HepG2 (cell line): ENCODE measurements at regions of chr5 and their contacts with region 1.

Region 1: GRCh38 chr5:88459971-88460370 is 191.3 kb upstream of the TMEM161B start:
- DNase-seq: no peak
- ATAC-seq: no peak
- H3K4me3 ChIP-seq: no peak overlapping the region
- H3K27ac ChIP-seq: no peak overlapping the region
- H3K4me1 ChIP-seq: no peaks in the 10 kb centered on the region
- H3K27me3 ChIP-seq: no peaks in the 10 kb centered on the region
- CTCF ChIP-seq: no peak
- EP300 ChIP-seq: no peak
- POLR2A ChIP-seq: no peak
- RAD21 ChIP-seq: no peak

Region 2: DNA sequence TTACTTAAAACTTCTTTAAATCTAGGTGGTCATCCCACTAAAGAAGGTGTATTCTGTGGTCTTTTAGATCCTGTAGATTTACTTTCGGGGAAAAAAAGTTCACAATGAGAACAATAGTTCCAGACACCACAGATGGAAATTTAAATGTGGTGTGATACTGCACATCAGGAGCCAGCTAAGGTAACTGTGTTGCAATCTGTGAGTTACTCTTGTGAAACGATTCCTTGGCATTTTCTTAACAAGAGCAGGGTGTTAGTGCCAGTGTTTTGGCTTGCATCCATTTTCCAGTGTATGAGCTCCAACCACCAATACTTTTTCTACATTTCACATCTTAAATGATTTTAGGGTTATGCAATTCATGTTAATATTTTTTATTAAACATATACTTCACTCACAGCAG is 1275.1 kb after region 1 on chr5:
- CTCF ChIA-PET with region 1: no interaction called
- POLR2A ChIA-PET with region 1: no interaction called
- in situ Hi-C with region 1: no loop called
- intact Hi-C with region 1: loop called (anchors 10 kb)
- DNase-seq: no peak
- ATAC-seq: no peak
- H3K4me3 ChIP-seq: no peak overlapping the region
- H3K27ac ChIP-seq: no peak overlapping the region
- H3K4me1 ChIP-seq: no peaks in the 10 kb centered on the region
- H3K27me3 ChIP-seq: no peaks in the 10 kb centered on the region
- CTCF ChIP-seq: no peak
- EP300 ChIP-seq: no peak
- POLR2A ChIP-seq: no peak
- RAD21 ChIP-seq: no peak